AG04450 (cell line): ENCODE measurements at regions of chr19 and their contacts with region 1.

Region 1: DNA sequence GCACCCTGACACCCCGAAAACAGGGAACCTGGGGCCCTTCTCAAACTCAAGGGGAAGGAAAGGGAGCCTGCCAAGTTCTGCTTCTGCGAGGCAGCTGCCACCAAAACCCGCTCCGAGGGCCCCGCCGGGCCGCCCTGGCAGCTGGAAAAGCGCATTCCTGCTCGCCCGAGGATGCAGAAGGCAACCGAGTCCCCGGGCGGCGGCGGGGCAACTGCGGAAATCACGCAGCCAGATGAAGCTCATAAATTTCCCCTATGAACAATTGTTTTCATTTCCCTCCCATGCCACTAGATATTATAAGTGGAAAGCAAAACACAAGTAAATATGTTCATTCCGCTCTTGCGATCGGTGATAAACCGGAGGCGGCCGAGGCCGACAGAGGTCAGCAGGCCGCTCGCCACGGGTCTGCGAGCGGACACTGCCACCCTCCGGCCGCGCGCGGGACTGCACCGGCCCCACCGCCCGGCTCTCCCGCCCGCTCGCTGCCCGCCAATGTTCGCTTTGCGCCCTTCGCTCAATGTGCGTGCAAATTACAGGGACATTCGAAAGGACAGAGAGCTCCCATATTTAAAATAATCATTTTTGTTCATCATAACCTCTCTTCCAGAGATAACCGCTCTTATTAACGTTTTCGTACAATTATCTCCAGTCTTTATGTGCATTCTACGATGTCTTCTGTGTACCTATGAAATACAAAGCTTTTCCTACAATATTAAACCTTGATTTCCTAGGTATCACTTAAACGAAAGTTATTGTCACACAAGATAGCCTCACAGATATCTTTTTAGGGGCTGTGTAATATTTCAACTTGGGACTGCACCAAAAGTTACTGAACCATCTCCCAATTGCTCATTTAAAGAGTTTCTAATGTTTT is 120.8 kb upstream of the ZNF507 start:
- DNase-seq: no peak
- H3K4me3 ChIP-seq: no peak overlapping the region
- H3K27ac ChIP-seq: no peak overlapping the region
- H3K27me3 ChIP-seq: peaks cover 7% of the 10 kb centered on the region
- CTCF ChIP-seq: peak; percentile 87

Region 2: GRCh38 chr19:30669329-30670010 is 1555.1 kb before region 1 on chr19:
- CTCF ChIA-PET with region 1: interaction called, 120 read pairs
- POLR2A ChIA-PET with region 1: no interaction called
- DNase-seq: no peak
- H3K4me3 ChIP-seq: no peak overlapping the region
- H3K27ac ChIP-seq: no peak overlapping the region
- H3K27me3 ChIP-seq: no peaks in the 10 kb centered on the region
- CTCF ChIP-seq: peak; percentile 77

Region 3: GRCh38 chr19:30682999-30683536 is 1541.5 kb before region 1 on chr19:
- CTCF ChIA-PET with region 1: interaction called, 121 read pairs
- POLR2A ChIA-PET with region 1: no interaction called
- DNase-seq: peak; percentile 61
- H3K4me3 ChIP-seq: no peak overlapping the region
- H3K27ac ChIP-seq: no peak overlapping the region
- H3K27me3 ChIP-seq: peaks cover 16% of the 10 kb centered on the region
- CTCF ChIP-seq: peak; percentile 90

Region 4: DNA sequence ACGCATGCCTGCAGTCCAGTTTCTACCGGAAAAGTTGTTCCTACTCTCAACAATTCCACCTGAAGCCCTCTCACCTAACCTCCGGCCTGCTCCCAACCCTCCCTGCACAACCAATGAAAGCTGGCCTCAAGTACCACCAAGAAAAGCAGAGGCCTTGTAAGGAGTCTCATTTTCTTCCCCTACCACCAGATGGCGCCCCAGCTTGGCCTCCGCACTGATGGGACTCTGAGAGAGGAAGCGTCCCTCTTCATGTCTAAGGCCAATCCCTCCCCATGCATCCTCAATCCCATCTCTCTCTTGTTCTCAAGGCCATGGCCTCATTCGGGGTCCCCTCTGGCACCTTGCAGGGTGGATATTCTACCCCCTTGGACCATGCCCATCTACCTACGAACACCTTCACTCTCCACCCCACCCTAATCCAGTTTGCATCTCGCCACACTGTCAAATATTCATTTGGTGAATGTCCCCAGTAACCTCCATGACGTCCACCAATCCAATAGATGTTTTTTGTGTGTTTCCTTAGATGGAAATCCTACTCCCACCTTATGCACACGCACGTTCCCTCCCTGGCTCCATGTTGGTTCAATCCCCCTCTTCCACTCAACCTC is 1439.7 kb before region 1 on chr19:
- CTCF ChIA-PET with region 1: interaction called, 24 read pairs
- POLR2A ChIA-PET with region 1: no interaction called
- DNase-seq: no peak
- H3K4me3 ChIP-seq: no peak overlapping the region
- H3K27ac ChIP-seq: no peak overlapping the region
- H3K27me3 ChIP-seq: no peaks in the 10 kb centered on the region
- CTCF ChIP-seq: peak; percentile 71

Region 5: DNA sequence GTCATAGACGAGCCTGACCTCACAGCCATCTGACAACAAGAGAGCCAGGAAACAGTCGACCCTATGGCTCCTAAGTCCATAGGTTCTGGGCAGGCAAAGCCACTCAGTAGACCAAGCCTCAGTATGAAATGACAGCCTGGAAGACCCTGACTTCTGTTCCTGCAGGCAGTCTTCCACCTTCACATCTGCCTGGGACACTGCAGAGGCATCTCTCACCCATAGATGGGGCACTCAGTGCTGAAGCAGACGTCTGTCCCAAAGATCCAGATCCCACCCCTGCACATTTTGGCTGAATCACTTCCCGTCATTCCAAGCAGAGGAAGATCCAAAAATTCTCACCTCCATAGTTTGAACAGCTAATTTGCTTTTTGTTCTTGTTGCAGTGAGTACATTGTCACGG is 18.5 kb before region 1 on chr19:
- CTCF ChIA-PET with region 1: interaction called, 19 read pairs
- POLR2A ChIA-PET with region 1: no interaction called
- DNase-seq: no peak
- H3K4me3 ChIP-seq: no peak overlapping the region
- H3K27ac ChIP-seq: no peak overlapping the region
- H3K27me3 ChIP-seq: no peaks in the 10 kb centered on the region
- CTCF ChIP-seq: no peak

Region 6: DNA sequence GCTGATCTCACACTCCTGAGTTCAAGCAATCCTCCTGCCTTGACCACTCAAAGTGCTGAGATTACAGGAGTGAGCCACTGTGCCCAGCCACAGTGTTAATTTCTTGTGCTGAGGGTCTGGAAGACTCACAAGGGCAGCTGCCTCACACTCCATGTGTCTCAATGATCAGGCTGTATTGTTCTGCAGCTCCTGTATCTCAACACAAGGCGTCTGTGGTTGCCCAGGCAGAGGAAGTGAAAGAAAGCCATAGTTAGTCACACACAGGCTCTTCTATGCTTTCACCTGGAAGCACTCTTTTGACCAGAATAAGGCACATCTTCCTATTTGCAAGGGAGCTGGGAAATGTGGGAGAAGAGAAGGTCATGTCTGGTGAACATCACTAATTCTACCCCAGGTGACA is 13.5 kb after region 1 on chr19:
- CTCF ChIA-PET with region 1: interaction called, 14 read pairs
- POLR2A ChIA-PET with region 1: no interaction called
- DNase-seq: no peak
- H3K4me3 ChIP-seq: no peak overlapping the region
- H3K27ac ChIP-seq: no peak overlapping the region
- H3K27me3 ChIP-seq: no peaks in the 10 kb centered on the region
- CTCF ChIP-seq: no peak